PC-9 (cell line): ENCODE measurements at regions of chr1 and their contacts with region 1.

Region 1: GRCh38 chr1:165597883-165598675 is 33.0 kb upstream of the MGST3 start:
- DNase-seq: peak; percentile 89
- H3K4me3 ChIP-seq: peak overlapping the region; percentile 60
- H3K27ac ChIP-seq: peak overlapping the region; percentile 56
- H3K4me1 ChIP-seq: peaks cover 9% of the 10 kb centered on the region
- H3K27me3 ChIP-seq: no peaks in the 10 kb centered on the region
- CTCF ChIP-seq: no peak

Region 2: GRCh38 chr1:165129568-165130164 is 468.4 kb before region 1 on chr1:
- CTCF ChIA-PET with region 1: no interaction called
- POLR2A ChIA-PET with region 1: no interaction called
- intact Hi-C with region 1: loop called (anchors 1 kb)
- DNase-seq: peak; percentile 61 to 69
- H3K4me3 ChIP-seq: no peak overlapping the region
- H3K27ac ChIP-seq: no peak overlapping the region
- H3K4me1 ChIP-seq: no peaks in the 10 kb centered on the region
- H3K27me3 ChIP-seq: peaks cover 27% of the 10 kb centered on the region
- CTCF ChIP-seq: peak; percentile 85

Region 3: GRCh38 chr1:165356876-165357275 is 241.2 kb before region 1 on chr1:
- CTCF ChIA-PET with region 1: interaction called, 17 read pairs
- POLR2A ChIA-PET with region 1: no interaction called
- intact Hi-C with region 1: no loop called
- DNase-seq: no peak
- H3K4me3 ChIP-seq: no peak overlapping the region
- H3K27ac ChIP-seq: no peak overlapping the region
- H3K4me1 ChIP-seq: no peaks in the 10 kb centered on the region
- H3K27me3 ChIP-seq: peaks cover 11% of the 10 kb centered on the region; the same call in 1 of the 2 replicates
- CTCF ChIP-seq: no peak

Region 4: GRCh38 chr1:165369255-165369848 is 228.7 kb before region 1 on chr1:
- CTCF ChIA-PET with region 1: no interaction called
- POLR2A ChIA-PET with region 1: no interaction called
- intact Hi-C with region 1: no loop called
- DNase-seq: peak in 1 of 2 experiments; percentile 25
- H3K4me3 ChIP-seq: no peak overlapping the region
- H3K27ac ChIP-seq: no peak overlapping the region
- H3K4me1 ChIP-seq: no peaks in the 10 kb centered on the region
- H3K27me3 ChIP-seq: no peaks in the 10 kb centered on the region
- CTCF ChIP-seq: peak; percentile 88

Region 5: DNA sequence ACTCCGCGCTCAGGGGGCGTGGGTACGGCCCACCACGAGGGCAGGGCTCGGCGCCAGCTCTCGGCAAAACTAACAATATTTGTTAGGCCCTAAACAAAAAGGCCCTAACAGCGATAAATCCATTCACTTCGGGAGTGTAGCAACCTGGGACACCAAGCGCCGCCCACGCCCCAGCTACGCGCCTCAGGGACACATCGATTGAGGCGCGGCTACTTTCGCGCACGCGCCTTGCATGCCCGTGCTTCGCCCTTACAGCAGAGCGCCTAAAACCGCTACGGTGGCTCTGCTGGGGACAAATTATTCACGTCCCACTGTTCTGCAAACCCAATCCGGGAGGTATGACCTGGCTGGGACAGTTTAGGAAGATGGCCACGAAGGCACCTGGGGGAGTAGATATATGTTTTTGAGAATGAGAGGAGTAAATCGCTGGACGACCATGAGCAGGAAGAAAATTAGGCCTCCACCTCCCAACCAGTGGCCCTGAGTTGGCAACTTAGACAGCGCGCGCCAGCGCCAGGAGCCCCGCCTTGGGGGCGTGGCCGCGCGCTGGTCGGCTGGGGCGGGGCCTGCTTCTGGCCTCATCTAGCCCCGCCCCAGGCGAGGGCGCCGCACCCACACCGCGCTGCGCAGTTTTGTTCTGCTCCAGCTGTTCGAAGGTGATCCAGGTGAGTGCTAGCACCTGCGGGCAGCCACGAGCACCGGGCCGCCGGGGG is 32.7 kb after region 1 on chr1 and contains the start of gene MGST3:
- CTCF ChIA-PET with region 1: no interaction called
- POLR2A ChIA-PET with region 1: interaction called, 25 read pairs
- intact Hi-C with region 1: loop called (anchors 1 kb)
- DNase-seq: peak; percentile 83 to 90
- H3K4me3 ChIP-seq: peak within 1 kb of the TSS; percentile 75
- H3K27ac ChIP-seq: peak within 1 kb of the TSS; percentile 80
- H3K4me1 ChIP-seq: peaks cover 30% of the 10 kb centered on the region
- H3K27me3 ChIP-seq: no peaks in the 10 kb centered on the region
- CTCF ChIP-seq: no peak
- total RNA-seq, gene MGST3: 67.2 and 90.1 TPM in 2 replicates

Region 6: GRCh38 chr1:165914136-165914798 is 316.2 kb after region 1 on chr1:
- CTCF ChIA-PET with region 1: interaction called, 8 read pairs
- POLR2A ChIA-PET with region 1: no interaction called
- intact Hi-C with region 1: loop called (anchors 1 kb)
- DNase-seq: peak; percentile 52 to 54
- H3K4me3 ChIP-seq: no peak overlapping the region
- H3K27ac ChIP-seq: no peak overlapping the region
- H3K4me1 ChIP-seq: no peaks in the 10 kb centered on the region
- H3K27me3 ChIP-seq: no peaks in the 10 kb centered on the region
- CTCF ChIP-seq: peak; percentile 89

Region 7: GRCh38 chr1:166069390-166069789 is 471.3 kb after region 1 on chr1:
- CTCF ChIA-PET with region 1: no interaction called
- POLR2A ChIA-PET with region 1: no interaction called
- intact Hi-C with region 1: no loop called
- DNase-seq: no peak
- H3K4me3 ChIP-seq: no peak overlapping the region
- H3K27ac ChIP-seq: no peak overlapping the region
- H3K4me1 ChIP-seq: no peaks in the 10 kb centered on the region
- H3K27me3 ChIP-seq: no peaks in the 10 kb centered on the region
- CTCF ChIP-seq: no peak